Left cardiac atrium (tissue), 4 donors: ENCODE measurements at regions of chr9 and their contacts with region 1.

Region 1: GRCh38 chr9:131270171-131271015 is 5.9 kb downstream of the FAM78A start:
- DNase-seq: peak; percentile 88
- ATAC-seq: peak; percentile 29 to 60

Region 2: GRCh38 chr9:131178382-131178781 is 92.0 kb before region 1 on chr9:
- intact Hi-C with region 1: loop called (anchors 5 to 10 kb)
- DNase-seq: peak; percentile 73
- ATAC-seq: peak; percentile 91 to 93

Region 3: DNA sequence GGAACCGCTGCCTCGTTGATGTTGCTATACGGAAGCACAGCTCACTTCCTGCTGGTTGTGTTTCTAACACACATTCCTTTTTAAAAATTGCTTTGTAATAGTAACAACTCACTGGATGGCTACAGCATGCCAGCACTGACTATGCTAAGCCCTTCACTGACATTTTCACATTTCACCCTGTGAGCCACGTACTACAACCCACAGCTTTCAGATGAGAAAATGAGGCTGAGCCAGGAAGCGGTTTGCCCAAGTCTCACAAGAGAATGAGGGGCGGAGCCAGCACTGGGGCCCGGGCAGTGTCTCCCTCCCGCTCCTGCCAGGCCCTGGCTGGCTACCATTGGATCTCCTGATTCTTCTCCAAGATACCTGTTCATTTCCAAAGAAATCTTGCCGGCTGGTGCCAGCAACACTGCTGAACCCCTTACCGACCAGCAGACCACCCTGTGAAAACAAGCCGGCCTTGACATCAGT is 32.4 kb before region 1 on chr9:
- intact Hi-C with region 1: loop called in 1 of 2 experiments (anchors 5 kb)
- DNase-seq: peak; percentile 83
- ATAC-seq: peak; percentile 51 to 68